IMR-90 (cell line): ENCODE measurements at regions of chr6 and their contacts with region 1.

Region 1: DNA sequence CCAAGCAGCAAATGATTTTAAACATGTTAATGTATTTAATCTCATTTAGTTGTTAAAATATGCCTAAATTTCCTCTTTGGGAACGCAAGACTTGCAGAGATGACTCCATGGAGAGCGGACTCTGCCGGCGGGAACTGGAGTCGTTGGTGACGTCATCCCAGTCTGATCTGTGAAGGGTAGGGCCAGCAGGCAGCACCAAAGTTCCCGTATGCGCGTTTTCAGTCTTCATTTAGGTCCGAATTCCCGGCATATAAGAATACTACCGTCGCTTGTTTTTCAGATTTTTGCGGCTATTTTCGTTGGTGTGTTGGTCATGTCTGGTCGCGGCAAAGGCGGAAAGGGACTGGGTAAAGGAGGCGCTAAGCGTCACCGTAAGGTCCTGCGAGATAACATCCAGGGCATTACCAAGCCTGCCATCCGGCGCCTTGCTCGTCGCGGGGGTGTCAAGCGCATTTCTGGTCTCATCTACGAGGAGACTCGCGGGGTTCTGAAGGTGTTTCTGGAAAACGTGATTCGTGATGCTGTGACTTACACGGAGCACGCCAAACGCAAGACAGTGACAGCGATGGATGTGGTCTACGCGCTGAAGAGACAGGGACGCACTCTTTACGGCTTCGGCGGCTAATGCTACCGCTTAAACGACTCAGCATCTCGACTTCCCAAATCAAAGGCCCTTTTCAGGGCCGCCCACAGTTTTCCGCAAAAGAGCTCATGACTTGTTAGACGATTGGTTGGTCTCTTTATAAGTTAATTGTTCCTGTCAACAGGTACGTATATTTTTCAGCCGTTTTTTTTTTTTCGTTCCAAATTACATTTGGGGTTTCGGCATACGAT is 117.3 kb downstream of the HFE start:
- DNase-seq: peak; percentile 99
- ATAC-seq: peak; percentile 79
- H3K4me3 ChIP-seq: peak overlapping the region; percentile 88
- H3K27ac ChIP-seq: peak overlapping the region; percentile 95
- H3K4me1 ChIP-seq: no peaks in the 10 kb centered on the region; the same call in 1 of the 2 replicates
- H3K27me3 ChIP-seq: no peaks in the 10 kb centered on the region
- CTCF ChIP-seq: peak; percentile 53
- POLR2A ChIP-seq: peak; percentile 99
- RAD21 ChIP-seq: 0 out of 2 replicates have a peak, but pooled peaks have one; percentile 1

Region 2: DNA sequence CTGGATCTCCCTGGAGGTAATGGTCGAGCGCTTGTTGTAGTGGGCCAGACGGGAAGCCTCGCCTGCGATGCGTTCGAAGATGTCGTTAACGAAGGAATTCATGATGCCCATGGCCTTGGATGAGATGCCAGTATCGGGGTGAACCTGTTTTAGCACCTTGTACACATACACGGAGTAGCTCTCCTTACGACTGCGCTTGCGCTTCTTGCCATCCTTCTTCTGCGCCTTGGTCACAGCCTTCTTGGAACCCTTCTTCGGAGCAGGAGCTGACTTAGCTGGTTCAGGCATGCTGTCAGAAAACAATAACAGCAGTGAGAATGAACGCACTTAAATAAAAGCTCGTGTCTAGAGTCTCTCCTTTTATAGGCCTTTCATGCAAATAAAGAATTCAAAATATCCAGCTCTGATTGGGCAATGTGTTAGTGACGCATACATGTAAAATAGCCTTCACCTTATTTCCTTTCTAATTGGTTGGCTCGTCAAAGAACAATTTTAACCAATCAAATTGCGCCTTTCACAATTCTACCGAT is 11.9 kb after region 1 on chr6:
- CTCF ChIA-PET with region 1: interaction called, 4 read pairs
- POLR2A ChIA-PET with region 1: interaction called, 50 read pairs
- dilution Hi-C with region 1: no loop called
- in situ Hi-C with region 1: no loop called
- intact Hi-C with region 1: loop called (anchors 1 kb)
- DNase-seq: peak; percentile 99
- ATAC-seq: peak; percentile 81
- H3K4me3 ChIP-seq: peak overlapping the region; percentile 47
- H3K27ac ChIP-seq: peak overlapping the region; percentile 22
- H3K4me1 ChIP-seq: no peaks in the 10 kb centered on the region
- H3K27me3 ChIP-seq: no peaks in the 10 kb centered on the region
- CTCF ChIP-seq: no peak
- POLR2A ChIP-seq: peak; percentile 99
- RAD21 ChIP-seq: no peak

Region 3: DNA sequence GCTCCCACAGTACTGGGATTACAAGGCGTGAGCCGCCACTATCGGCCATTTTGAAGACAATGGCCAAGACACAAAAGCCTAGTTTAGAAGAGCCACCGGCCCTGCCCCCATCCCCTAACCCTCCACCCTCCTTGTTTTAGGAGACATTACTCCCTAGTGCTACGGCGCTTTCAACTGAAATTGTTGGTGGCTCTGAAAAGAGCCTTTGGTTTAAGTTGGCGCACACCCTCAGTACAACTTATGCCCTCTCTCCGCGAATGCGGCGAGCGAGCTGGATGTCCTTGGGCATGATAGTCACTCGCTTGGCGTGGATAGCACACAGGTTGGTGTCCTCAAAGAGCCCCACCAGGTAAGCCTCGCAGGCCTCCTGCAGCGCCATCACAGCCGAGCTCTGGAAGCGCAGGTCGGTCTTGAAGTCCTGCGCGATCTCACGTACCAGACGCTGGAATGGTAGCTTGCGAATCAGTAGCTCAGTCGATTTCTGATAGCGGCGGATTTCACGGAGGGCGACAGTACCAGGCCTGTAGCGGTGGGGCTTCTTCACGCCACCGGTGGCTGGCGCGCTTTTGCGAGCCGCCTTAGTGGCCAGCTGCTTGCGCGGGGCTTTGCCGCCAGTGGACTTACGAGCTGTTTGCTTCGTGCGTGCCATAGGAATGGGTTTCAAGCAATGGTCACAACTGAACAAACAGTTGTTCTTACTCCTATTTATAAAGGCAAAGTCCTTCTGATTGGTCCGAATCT is 45.6 kb after region 1 on chr6:
- CTCF ChIA-PET with region 1: no interaction called
- POLR2A ChIA-PET with region 1: no interaction called
- dilution Hi-C with region 1: no loop called
- in situ Hi-C with region 1: no loop called
- intact Hi-C with region 1: loop called (anchors 2 kb)
- DNase-seq: peak; percentile 73
- ATAC-seq: peak; percentile 61
- H3K4me3 ChIP-seq: peak overlapping the region; percentile 66
- H3K27ac ChIP-seq: peak overlapping the region; percentile 50
- H3K4me1 ChIP-seq: no peaks in the 10 kb centered on the region
- H3K27me3 ChIP-seq: no peaks in the 10 kb centered on the region
- CTCF ChIP-seq: peak; percentile 38
- POLR2A ChIP-seq: peak; percentile 89
- RAD21 ChIP-seq: no peak